Activated B cell treated with CpG ODN at 0.5 μM for 24 hours (primary cell): ENCODE measurements at regions of chr5 and their contacts with region 1.

Region 1: DNA sequence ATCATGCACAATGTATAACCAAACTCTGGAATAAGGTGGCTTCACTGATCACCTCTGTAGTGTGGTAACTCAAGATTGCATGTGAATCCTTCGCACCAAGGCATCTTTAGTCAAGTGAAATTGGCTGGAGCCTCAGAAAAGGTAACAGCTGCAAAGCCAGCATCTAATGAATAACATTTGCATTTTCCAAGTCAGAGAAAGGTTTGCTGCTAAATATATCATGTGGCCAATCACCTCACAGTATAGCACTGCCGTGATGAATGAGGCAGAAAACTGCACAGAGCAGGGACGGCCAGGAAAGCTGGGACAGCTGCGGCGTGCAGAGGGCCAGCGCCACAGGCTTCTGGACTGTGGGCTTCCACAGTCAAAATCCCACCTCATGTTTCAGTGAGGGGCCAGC is 18.5 kb downstream of the MRPS27 start:
- DNase-seq: no peak
- ATAC-seq: peak; percentile 62
- H3K4me3 Mint-ChIP-seq: peak overlapping the region; percentile 29
- H3K27ac Mint-ChIP-seq: peak overlapping the region; percentile 14
- H3K4me1 Mint-ChIP-seq: peaks cover 93% of the 10 kb centered on the region
- H3K27me3 Mint-ChIP-seq: no peaks in the 10 kb centered on the region
- CTCF ChIP-seq: no peak

Region 2: DNA sequence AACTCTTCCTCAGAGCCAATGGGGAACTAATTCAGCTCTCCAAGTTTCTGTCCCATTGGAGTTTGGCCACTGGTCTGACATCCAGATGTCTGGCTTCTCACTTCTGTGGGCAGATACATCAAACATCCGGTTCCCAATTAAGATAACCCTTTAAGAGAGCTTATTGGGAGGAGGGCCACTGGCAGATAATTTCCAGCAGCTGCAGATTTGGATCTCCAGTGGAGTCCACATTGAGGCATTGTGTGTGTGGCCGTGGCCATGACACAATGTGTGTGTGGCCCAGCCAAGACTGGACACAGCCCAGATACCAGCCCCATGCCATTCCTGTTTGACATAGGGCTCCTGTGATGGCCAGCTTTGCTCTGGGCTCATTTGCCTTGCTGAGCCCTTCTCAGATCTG is 304.8 kb before region 1 on chr5:
- CTCF ChIA-PET with region 1: no interaction called
- POLR2A ChIA-PET with region 1: no interaction called
- intact Hi-C with region 1: no loop called
- DNase-seq: no peak
- ATAC-seq: no peak
- H3K4me3 Mint-ChIP-seq: no peak overlapping the region
- H3K27ac Mint-ChIP-seq: no peak overlapping the region
- H3K4me1 Mint-ChIP-seq: no peaks in the 10 kb centered on the region
- H3K27me3 Mint-ChIP-seq: peaks cover 2% of the 10 kb centered on the region
- CTCF ChIP-seq: no peak

Region 3: GRCh38 chr5:72156946-72157624 is 144.5 kb before region 1 on chr5:
- CTCF ChIA-PET with region 1: no interaction called
- POLR2A ChIA-PET with region 1: no interaction called
- intact Hi-C with region 1: no loop called
- DNase-seq: no peak
- ATAC-seq: no peak
- H3K4me3 Mint-ChIP-seq: no peak overlapping the region
- H3K27ac Mint-ChIP-seq: no peak overlapping the region
- H3K4me1 Mint-ChIP-seq: no peaks in the 10 kb centered on the region
- H3K27me3 Mint-ChIP-seq: peaks cover 3% of the 10 kb centered on the region
- CTCF ChIP-seq: no peak

Region 4: DNA sequence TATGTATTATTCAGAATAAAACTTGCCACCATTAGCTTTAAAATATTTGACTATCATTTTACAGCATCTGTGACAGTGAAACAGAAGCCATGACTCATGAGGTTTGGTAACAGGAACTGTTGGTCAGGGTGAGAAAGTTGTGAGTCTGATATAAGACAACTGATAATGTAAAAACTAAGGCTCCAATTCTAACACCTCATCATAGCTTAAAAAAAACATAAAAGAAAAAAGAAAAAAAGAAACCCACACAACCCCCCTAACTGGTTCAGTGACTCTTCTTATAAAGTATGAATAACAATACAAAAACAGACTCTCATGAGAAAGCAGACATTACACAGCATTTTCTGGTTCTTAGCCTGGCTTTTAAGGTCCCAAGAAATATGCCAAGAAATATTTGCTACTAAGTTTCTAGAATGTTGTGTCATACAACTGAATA is 67.3 kb before region 1 on chr5:
- CTCF ChIA-PET with region 1: no interaction called
- POLR2A ChIA-PET with region 1: no interaction called
- intact Hi-C with region 1: loop called (anchors 2 kb)
- DNase-seq: no peak
- ATAC-seq: peak; percentile 56
- H3K4me3 Mint-ChIP-seq: no peak overlapping the region
- H3K27ac Mint-ChIP-seq: no peak overlapping the region
- H3K4me1 Mint-ChIP-seq: peaks cover 22% of the 10 kb centered on the region
- H3K27me3 Mint-ChIP-seq: no peaks in the 10 kb centered on the region
- CTCF ChIP-seq: no peak

Region 5: DNA sequence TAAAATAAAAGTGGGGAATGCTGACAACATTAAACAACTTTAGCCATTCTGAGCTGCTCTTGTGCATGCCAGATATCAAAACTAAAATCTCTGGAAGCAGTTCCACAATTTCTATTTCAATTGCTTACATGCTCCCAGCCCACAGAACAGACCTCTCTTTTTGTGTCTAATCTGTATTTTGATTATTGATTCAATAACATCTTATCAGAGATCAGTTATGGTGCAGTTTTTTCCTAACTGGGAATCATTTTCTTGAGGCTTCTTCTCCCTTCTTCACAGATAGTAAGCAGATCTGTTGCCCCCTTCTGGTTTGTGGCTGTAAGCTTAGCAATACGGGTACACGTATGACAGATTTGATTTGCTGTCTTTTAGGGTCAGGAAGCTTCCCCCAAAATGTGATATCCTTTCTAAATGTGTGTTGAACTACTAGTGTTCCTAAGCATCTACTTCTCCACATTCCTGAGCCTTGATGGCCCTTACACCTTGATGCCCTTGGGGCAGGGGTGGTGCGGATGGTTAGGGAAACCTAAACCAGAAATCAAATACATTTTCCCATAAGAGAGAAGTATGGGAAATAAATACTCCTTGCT is 20.9 kb before region 1 on chr5:
- CTCF ChIA-PET with region 1: interaction called, 3 read pairs
- POLR2A ChIA-PET with region 1: interaction called, 5 read pairs
- intact Hi-C with region 1: loop called (anchors 2 kb)
- DNase-seq: no peak
- ATAC-seq: peak; percentile 28
- H3K4me3 Mint-ChIP-seq: no peak overlapping the region
- H3K27ac Mint-ChIP-seq: no peak overlapping the region
- H3K4me1 Mint-ChIP-seq: peaks cover 15% of the 10 kb centered on the region
- H3K27me3 Mint-ChIP-seq: no peaks in the 10 kb centered on the region
- CTCF ChIP-seq: no peak

Region 6: DNA sequence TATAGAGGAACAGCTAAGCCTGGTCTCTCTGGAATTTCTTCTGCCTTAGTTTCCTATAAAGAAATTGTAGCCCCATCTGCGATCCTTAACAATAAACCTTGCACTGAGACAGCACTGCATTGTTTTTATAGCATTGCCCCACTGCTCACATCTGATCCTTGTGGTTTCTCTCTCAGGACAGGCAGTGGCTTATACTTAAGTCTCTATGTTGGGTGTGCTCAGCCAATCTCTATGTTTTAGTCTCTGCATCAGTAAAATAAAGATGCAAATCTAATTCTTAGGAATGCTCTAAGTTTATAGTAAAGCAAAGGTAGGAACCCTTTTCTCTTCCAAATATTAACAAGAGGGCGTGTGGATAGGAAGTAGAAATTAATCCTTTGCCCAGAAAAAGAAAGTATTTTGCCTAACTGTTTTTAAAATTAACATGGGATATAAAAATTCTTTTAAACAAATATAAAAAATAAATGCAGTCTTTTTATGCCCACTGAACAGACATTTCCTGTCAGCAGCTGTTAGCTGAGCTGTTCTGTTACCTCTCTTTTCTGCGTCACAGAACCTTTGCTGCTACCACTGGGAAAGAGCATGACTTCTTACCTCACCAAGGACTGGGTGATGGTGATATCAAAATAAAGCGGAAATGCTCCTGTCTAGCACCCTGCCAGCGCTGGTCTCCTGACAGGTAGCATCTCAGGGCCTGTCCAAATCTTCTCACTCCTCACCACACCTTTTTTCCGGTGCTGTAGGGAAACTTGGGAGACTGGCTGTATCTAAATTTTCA is 11.0 kb before region 1 on chr5:
- CTCF ChIA-PET with region 1: interaction called, 5 read pairs
- POLR2A ChIA-PET with region 1: interaction called, 5 read pairs
- intact Hi-C with region 1: loop called (anchors 1 kb)
- DNase-seq: no peak
- ATAC-seq: peak; percentile 72
- H3K4me3 Mint-ChIP-seq: no peak overlapping the region
- H3K27ac Mint-ChIP-seq: peak overlapping the region; percentile 70
- H3K4me1 Mint-ChIP-seq: peaks cover 58% of the 10 kb centered on the region
- H3K27me3 Mint-ChIP-seq: no peaks in the 10 kb centered on the region
- CTCF ChIP-seq: no peak

Region 7: GRCh38 chr5:72467421-72468386 is 166.1 kb after region 1 on chr5:
- CTCF ChIA-PET with region 1: no interaction called
- POLR2A ChIA-PET with region 1: no interaction called
- intact Hi-C with region 1: no loop called
- DNase-seq: no peak
- ATAC-seq: no peak
- H3K4me3 Mint-ChIP-seq: no peak overlapping the region
- H3K27ac Mint-ChIP-seq: no peak overlapping the region
- H3K4me1 Mint-ChIP-seq: peaks cover 13% of the 10 kb centered on the region
- H3K27me3 Mint-ChIP-seq: peaks cover 2% of the 10 kb centered on the region
- CTCF ChIP-seq: no peak